Right ventricle myocardium superior (tissue), 1 donor: ENCODE measurements at regions of chr15 and their contacts with region 1.

Region 1: GRCh38 chr15:73081321-73081958 is 29.2 kb downstream of the NEO1 start:
- DNase-seq: no peak
- ATAC-seq: peak; percentile 48

Region 2: DNA sequence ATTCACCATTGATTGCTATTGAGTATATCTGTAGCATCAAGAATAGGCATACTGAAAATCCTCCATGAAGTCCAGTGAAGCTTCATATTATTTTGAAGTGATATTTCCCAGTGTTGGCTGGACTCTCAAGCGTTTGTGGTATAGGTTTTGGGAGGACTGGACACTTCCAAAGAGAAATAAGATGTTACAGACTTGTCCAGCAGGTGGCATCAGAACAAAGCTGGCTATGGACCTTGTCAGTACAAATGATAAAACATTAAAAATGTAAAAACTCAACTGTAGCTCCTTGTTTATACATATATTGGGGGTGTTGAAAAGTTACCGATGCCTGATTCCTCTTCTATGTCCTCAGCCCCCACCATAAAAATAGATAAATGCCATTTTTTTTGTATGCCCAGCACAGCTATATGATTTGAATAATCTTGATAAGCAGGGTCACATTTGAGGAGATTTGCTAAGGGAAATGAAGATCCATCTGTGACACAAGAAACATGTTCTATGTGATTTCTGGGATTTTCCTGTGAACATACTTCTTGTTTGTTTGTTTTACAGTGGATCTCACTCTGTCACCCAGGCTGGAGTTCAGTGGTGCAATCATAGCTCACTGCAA is 481.5 kb before region 1 on chr15:
- intact Hi-C with region 1: loop called (anchors 10 kb)
- DNase-seq: no peak
- ATAC-seq: peak; percentile 58

Region 3: DNA sequence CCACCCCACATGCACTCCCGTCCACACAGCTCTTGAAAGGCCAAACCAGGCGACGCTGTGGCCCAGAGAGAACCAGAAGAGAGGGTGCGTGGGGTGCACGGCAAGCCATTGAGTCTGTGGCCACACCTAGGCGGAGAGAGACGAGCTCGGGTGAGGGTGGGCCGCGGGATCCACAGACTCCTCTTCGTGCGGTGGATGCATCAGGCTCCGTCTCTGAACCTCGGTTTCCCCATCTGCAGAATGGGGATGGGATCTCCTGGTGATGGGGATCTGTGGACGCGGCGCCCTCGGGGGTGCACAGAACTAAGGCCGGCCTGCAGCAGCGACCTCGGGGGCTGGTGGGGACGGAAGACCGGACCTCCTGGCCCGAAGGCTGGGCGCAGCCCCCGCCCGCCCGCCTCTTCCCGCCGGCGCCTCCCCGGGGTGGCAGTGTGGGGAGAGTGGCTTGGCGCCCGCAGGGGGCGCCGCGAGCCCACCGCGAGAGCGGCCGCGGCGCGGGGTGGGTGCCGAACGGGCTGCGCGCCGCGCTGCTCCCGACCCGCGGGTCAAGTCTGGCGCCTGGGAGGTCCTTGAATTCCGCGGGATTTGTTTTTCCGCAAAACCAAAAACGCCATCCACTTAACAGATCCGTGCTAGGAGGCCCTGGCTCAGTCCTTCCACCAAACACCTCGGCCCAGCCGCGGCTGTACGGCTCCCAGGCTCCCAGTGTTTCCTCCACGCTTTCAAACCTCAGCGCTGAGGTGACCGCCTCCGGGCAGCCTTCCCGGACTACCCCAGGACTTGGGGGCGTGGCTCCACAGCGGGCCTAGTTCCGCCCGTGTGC is 284.7 kb before region 1 on chr15:
- intact Hi-C with region 1: loop called (anchors 5 kb)
- DNase-seq: peak; percentile 68
- ATAC-seq: peak; percentile 96

Region 4: DNA sequence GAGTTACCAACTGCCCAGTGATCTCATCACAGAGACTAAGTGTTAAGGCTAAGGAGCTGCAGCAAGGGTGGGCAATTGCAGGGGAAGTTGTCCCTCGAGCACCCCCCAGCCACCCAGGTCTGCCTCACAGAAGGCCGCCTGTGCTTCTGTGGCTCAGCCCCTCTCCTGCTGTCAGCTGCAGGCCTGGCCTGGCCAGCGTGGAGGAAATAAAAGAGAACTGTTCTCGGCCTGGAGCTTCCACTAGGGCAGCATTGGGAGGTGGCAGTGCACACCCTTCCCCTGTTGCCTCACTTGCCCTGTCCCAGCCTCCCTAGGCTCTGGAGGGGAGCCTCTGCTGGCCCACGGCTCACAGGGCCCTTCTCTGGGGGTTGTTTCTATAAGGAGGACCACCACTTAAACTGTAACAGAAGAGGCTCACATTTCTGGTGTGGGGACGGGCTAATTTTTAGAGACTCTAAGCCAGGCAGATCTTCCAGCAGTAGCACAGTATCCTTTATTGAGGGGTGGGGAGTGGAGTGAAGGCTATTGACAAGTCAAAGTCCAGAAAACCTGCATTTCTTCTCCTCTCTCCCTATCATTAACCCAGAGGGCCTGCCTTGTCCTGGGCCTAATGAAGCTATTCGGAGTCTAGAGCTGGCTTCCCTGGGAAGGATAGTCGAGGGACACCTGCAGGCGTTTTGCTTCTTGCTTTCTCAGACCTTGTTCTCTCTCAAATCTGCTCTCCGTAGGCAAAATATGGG is 222.3 kb before region 1 on chr15:
- intact Hi-C with region 1: no loop called
- DNase-seq: no peak
- ATAC-seq: no peak

Region 5: DNA sequence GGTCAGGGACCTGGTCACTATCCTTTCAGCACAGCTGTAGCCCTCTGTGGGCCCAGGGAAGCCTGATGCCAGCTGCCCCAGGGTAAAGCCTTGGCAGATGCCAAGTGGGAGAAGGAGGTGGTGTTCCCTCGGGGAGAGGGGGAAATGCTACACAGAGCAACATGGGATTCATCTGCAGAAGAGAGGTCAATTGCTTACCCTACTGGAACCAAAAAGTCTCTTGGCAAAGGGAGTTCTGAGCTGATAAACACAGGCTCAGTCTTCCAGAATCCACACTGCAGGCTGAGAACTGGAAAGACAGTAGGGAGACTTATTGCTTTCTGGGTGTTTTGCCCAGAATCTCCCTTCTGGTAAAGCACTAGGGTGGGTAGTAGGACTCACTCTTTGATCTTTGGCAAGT is 129.3 kb before region 1 on chr15:
- intact Hi-C with region 1: no loop called
- DNase-seq: no peak
- ATAC-seq: no peak

Region 6: DNA sequence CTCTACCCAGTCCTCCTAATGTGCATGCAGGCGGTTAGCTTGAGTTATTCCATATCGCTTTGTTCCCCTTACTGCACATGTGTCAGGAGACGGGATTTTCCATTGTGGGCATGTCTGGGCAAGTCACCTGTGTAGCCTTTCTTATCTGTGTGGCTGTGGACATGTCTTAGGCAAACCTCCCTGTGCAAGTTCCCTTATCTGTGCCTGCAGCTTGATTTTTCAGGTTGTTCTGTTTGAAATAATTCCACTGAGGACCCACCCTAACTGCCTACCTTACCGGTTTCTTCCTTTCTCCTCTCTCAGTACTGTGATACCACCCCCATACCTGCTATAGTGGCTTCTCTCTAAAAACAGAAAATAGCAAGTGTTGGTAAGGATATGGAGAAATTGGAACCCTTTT is 84.4 kb after region 1 on chr15:
- intact Hi-C with region 1: no loop called
- DNase-seq: no peak
- ATAC-seq: no peak